Activated CD4-positive, alpha-beta memory T cell treated with anti-CD3 and anti-CD28 coated beads, Interleukin-2, amount 10 ng/mL, durations not matched to agents 7 days and 5 days (primary cell): ENCODE measurements at regions of chr11 and their contacts with region 1.

Region 1: DNA sequence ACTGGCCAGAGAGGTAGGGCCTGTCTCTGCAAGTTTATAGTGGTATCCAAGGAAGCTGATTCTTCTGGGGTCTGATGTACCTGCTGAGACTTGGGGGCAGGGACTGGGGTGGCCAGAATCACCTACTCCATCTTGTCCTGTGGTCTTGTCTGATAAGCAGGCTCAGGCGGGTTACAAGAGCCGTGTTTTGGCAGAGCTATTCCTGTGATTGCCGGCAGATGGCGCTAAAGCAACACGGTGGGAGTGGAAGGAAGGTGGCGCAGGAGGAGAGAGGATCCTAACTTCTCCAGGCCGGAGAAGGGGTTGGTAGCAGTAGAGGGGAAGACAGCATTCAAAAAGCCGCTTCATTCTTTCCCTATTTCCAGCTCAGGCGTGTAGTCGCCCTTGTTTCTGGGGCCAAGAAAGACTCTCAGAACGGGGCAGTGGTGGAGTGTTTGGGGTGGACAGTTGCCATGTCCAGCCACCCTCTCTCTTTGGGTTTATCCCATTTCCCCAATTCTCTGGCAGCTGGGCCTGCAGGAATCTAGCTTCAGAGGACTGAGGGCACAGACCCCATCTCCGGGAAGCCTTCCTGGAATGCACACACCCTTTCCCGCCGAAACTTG is 15.1 kb downstream of the CHRM1 start:
- DNase-seq: peak; percentile 82
- H3K4me3 Mint-ChIP-seq: no peak overlapping the region
- H3K27ac Mint-ChIP-seq: no peak overlapping the region
- H3K4me1 Mint-ChIP-seq: peaks cover 26% of the 10 kb centered on the region
- H3K27me3 Mint-ChIP-seq: peaks cover 29% of the 10 kb centered on the region

Region 2: GRCh38 chr11:62880803-62881578 is 25.0 kb before region 1 on chr11 and contains the start of gene SLC3A2:
- CTCF ChIA-PET with region 1: interaction called, 15 read pairs
- POLR2A ChIA-PET with region 1: interaction called, 19 read pairs
- DNase-seq: peak; percentile 92
- H3K4me3 Mint-ChIP-seq: peak within 1 kb of the TSS; percentile 99
- H3K27ac Mint-ChIP-seq: peak within 1 kb of the TSS; percentile 100
- H3K4me1 Mint-ChIP-seq: peaks cover 51% of the 10 kb centered on the region
- H3K27me3 Mint-ChIP-seq: no peaks in the 10 kb centered on the region
- total RNA-seq, gene SLC3A2: 262 to 279 TPM

Region 3: GRCh38 chr11:62923601-62924411 is 17.8 kb after region 1 on chr11:
- CTCF ChIA-PET with region 1: interaction called, 10 read pairs
- POLR2A ChIA-PET with region 1: no interaction called
- DNase-seq: no peak
- H3K4me3 Mint-ChIP-seq: no peak overlapping the region
- H3K27ac Mint-ChIP-seq: no peak overlapping the region
- H3K4me1 Mint-ChIP-seq: peaks cover 18% of the 10 kb centered on the region
- H3K27me3 Mint-ChIP-seq: peaks cover 78% of the 10 kb centered on the region

Region 4: GRCh38 chr11:62948765-62949320 is 42.8 kb after region 1 on chr11:
- CTCF ChIA-PET with region 1: interaction called, 11 read pairs
- POLR2A ChIA-PET with region 1: no interaction called
- DNase-seq: no peak
- H3K4me3 Mint-ChIP-seq: no peak overlapping the region
- H3K27ac Mint-ChIP-seq: no peak overlapping the region
- H3K4me1 Mint-ChIP-seq: no peaks in the 10 kb centered on the region
- H3K27me3 Mint-ChIP-seq: peaks cover 17% of the 10 kb centered on the region

Region 5: DNA sequence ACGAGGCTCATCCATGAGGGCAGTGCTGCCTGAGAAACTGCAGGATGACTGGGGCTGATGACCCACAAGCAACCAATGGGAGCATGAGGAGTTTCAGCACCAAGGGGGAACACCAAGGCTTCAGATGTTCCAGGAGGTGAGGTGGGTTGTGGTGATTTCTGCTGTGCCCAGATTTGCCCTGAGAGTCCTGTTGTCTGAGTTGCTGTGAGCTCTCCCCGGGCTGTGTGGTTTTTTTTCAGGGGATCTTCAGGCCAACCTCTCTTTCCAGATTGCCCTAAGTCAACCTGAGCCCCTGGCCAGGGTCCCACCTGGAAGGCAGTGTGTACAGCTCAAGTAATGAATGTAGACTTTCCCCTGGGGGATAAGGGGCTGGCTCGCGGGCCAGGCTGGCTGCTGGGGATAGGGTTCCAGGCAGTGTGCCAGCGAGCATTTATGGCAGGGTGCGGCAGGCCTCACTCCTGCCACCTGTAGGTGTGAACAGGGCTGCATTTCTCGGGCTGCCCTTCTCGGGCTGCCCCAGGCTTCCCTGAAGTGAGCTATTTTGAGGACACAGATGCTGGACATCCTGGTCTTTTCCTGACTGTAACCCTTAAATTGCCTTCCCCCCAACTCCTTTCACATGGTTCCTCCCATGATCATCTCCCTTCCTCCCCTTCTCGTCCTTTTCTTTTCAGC is 69.0 kb after region 1 on chr11:
- CTCF ChIA-PET with region 1: interaction called, 30 read pairs
- POLR2A ChIA-PET with region 1: no interaction called
- DNase-seq: no peak
- H3K4me3 Mint-ChIP-seq: no peak overlapping the region
- H3K27ac Mint-ChIP-seq: no peak overlapping the region
- H3K4me1 Mint-ChIP-seq: no peaks in the 10 kb centered on the region
- H3K27me3 Mint-ChIP-seq: peaks cover 18% of the 10 kb centered on the region

Region 6: GRCh38 chr11:63023841-63024648 is 118.0 kb after region 1 on chr11:
- CTCF ChIA-PET with region 1: interaction called, 156 read pairs
- POLR2A ChIA-PET with region 1: no interaction called
- DNase-seq: peak; percentile 82
- H3K4me3 Mint-ChIP-seq: no peak overlapping the region
- H3K27ac Mint-ChIP-seq: no peak overlapping the region
- H3K4me1 Mint-ChIP-seq: peaks cover 2% of the 10 kb centered on the region
- H3K27me3 Mint-ChIP-seq: peaks cover 12% of the 10 kb centered on the region

Region 7: DNA sequence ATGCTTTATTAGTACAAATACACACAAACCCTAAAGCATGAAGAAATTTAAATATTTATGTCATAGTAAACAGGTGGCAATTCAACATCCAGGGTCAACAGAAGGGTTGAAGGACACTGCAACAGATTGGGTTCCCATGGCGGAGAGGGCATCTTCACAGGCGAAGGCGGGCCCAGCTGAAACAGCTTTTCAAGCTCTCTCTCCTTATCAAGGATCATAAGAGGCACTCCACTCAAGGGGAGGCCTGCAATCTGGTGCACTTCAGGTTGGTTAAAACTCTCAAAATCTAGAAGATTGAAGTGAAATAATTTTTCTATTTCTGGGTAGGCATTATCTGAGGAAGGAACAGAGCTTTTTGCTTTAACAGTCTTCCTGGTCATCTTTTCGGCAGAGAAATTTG is 126.4 kb after region 1 on chr11:
- CTCF ChIA-PET with region 1: interaction called, 28 read pairs
- POLR2A ChIA-PET with region 1: interaction called, 3 read pairs
- DNase-seq: no peak
- H3K4me3 Mint-ChIP-seq: no peak overlapping the region
- H3K27ac Mint-ChIP-seq: no peak overlapping the region
- H3K4me1 Mint-ChIP-seq: no peaks in the 10 kb centered on the region
- H3K27me3 Mint-ChIP-seq: peaks cover 34% of the 10 kb centered on the region